GM10248 (cell line): ENCODE measurements at regions of chr6 and their contacts with region 1.

Region 1: GRCh38 chr6:41683510-41684310 is 45.4 kb downstream of the MDFI start:
- DNase-seq: peak; percentile 89
- CTCF ChIP-seq: peak; percentile 89

Region 2: DNA sequence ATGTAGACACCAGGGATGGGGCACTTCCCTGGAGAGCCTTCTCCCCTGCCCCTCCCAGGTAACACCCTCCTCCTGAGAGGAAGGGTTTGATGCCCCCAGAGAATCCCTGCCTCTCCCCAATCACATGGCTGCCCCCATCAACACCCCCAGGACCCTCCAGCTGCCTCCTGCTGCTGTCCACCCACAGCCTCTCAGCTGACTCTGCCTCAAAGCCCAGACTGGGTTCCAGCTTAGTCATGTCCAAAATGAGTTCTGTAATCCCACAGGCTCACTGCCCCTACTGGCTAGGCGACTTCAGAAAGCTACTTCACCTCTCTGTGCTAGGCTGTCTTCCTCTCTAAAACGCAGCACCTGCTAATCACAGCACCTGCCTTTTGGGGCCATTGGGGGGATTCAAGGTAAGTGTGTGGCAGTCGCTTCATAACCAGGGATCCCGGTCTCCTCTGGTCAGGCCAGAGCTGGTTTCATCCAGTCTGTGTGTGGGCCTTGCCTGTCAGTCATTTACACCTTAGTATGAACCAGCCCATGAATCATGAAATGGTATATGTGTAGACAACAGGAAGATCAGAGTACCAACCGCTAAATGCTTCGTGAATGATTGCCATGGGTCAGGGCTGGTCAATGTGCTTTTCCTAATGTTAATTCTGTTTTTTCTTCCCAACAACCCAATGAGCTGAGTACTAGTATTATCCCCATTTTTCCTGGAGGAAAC is 11.3 kb after region 1 on chr6:
- CTCF ChIA-PET with region 1: interaction called, 58 read pairs
- POLR2A ChIA-PET with region 1: no interaction called
- DNase-seq: no peak
- CTCF ChIP-seq: no peak